A673 (cell line): ENCODE measurements at regions of chr15 and their contacts with region 1.

Region 1: DNA sequence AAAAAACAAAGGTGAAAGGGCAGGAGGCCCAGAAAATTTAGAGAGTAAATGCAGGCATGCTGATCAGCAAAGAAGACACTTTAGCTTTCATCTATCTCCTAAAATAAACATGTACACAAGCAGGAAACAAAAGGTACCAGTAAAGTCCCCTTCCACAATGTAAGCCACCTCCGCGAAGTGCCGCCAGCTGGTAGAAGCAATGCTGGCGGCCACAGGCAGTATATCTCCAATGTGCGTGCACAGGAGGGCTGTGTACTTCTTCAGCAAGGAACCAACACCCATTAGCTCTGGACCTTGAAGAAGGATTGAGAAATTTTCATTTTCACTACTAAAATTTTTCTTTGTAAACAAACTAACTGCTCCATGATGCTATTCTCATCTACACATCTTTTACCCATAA is 75.4 kb downstream of the HERC2 start:
- DNase-seq: no peak
- H3K4me3 ChIP-seq: no peak overlapping the region
- H3K27ac ChIP-seq: no peak overlapping the region
- H3K4me1 ChIP-seq: no peaks in the 10 kb centered on the region
- H3K27me3 ChIP-seq: no peaks in the 10 kb centered on the region
- CTCF ChIP-seq: no peak

Region 2: DNA sequence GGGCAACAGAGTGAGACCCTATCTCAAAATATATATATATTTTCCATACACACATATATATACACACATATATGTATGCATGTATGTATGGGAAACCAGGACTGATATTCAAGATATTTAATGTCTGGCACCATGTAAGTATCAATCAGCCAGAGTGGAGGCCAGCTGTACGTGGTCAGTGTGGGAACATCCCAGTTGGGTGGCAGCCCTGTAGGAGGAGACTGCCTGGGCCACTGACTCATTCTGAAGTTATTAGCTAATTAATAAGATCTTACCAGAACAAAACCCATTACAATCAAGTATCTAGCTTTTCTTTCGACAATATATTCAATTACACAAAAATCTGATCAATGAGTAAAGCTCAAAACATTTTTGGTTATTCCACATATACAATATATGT is 62.4 kb before region 1 on chr15:
- CTCF ChIA-PET with region 1: no interaction called
- POLR2A ChIA-PET with region 1: no interaction called
- intact Hi-C with region 1: loop called (anchors 10 kb)
- DNase-seq: no peak
- H3K4me3 ChIP-seq: no peak overlapping the region
- H3K27ac ChIP-seq: no peak overlapping the region
- H3K4me1 ChIP-seq: no peaks in the 10 kb centered on the region
- H3K27me3 ChIP-seq: no peaks in the 10 kb centered on the region
- CTCF ChIP-seq: no peak